HEK293 (cell line): ENCODE measurements at regions of chr16 and their contacts with region 1.

Region 1: DNA sequence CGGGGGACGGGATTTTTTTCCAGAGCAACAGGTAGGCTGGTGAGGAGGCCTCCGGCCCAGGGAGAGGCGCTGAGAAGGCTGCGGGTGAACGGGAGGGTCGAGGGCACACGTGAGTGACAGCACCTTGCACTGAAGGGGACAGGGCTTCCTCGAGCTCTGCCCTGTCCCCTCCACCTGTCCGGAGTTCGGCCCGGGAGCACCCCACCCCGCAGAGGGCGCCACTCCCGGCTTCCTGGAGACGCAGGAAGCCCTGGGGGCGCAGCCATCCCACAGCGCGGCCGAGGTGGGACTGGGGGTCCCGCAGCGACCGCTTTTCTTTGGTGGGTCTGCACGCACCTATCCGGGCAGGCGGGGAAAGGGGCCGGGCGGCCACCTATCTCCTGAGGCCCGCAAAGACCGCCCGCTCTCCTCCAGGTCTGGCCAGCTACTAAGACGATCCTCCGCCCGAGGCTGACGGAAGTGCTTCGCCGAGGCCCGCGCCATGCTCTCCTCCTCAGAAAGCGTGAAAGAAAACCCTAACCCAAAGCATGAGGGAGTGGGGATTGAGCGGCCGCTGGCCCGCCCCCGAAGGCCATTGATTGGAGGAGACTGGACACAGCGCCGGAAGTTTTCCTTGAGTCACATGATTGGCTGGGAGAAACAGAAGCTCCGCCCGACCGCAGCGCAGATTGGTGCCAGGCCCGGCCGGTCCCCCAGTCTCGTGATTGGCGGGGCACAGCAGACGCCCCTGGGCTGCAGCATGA is 34.3 kb downstream of the DDX19A start:
- H3K4me3 ChIP-seq: peak overlapping the region; percentile 57
- H3K27ac ChIP-seq: peak overlapping the region; percentile 88
- H3K4me1 ChIP-seq: peaks cover 3% of the 10 kb centered on the region; the same call in 1 of the 2 replicates
- CTCF ChIP-seq: peak; percentile 89

Region 2: GRCh38 chr16:70345840-70346239 is 35.2 kb before region 1 on chr16:
- CTCF ChIA-PET with region 1: no interaction called
- POLR2A ChIA-PET with region 1: interaction called, 12 read pairs
- H3K4me3 ChIP-seq: peak overlapping the region; percentile 92
- H3K27ac ChIP-seq: peak overlapping the region; percentile 78; the same call in 1 of the 2 replicates
- H3K4me1 ChIP-seq: peaks cover 3% of the 10 kb centered on the region; the same call in 1 of the 2 replicates
- CTCF ChIP-seq: no peak

Region 3: GRCh38 chr16:70438969-70439862 is 58.2 kb after region 1 on chr16 and contains the start of gene ST3GAL2:
- CTCF ChIA-PET with region 1: interaction called, 4 read pairs
- POLR2A ChIA-PET with region 1: interaction called, 28 read pairs
- H3K4me3 ChIP-seq: peak within 1 kb of the TSS; percentile 52
- H3K27ac ChIP-seq: peak within 1 kb of the TSS; percentile 71
- H3K4me1 ChIP-seq: peaks cover 7% of the 10 kb centered on the region
- CTCF ChIP-seq: peak; percentile 63

Region 4: DNA sequence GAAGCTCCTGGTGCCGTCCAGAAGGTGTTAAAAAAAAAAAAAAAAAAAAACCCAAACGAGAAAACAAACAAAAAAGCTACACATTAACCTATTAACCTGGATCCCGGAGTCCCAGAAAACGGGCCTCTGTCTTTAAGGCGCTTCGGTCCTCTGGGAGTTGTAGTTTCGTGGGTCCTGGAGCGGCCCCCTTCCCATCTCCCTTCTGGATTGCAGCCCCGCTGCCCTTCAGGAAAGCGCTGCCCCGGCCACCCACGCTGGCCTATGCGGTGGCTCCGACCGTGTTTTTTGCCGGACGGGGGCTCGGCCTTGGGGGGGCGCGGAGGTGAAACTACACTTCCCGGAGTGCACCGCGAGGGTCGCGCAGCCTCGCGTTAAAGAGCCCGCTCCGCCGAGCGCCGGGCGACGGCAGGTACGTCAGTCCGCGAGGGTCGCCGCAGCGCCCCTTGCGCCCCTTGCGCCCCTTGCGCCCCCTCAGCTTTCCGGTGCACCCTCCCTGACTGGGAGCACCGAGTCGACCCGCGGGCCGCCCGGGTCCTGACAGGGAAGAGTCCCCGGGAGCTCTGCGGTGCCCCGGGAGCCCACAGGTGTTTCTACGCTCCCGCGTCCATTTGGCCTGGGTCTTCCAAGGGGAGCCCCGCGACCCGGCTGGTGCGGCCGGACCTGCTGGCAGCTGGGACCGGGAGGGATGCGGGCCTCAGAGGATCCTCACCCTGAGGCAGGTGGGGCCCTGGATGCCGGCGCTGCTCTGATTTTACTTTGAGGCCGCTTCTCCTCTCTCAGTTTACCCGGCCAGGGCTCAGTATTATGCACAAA is 73.4 kb after region 1 on chr16 and contains the start of gene FCSK:
- CTCF ChIA-PET with region 1: interaction called, 3 read pairs
- POLR2A ChIA-PET with region 1: interaction called, 14 read pairs
- H3K4me3 ChIP-seq: peak within 1 kb of the TSS; percentile 89
- H3K27ac ChIP-seq: peak within 1 kb of the TSS; percentile 98
- H3K4me1 ChIP-seq: no peaks in the 10 kb centered on the region
- CTCF ChIP-seq: peak; percentile 92

Region 5: DNA sequence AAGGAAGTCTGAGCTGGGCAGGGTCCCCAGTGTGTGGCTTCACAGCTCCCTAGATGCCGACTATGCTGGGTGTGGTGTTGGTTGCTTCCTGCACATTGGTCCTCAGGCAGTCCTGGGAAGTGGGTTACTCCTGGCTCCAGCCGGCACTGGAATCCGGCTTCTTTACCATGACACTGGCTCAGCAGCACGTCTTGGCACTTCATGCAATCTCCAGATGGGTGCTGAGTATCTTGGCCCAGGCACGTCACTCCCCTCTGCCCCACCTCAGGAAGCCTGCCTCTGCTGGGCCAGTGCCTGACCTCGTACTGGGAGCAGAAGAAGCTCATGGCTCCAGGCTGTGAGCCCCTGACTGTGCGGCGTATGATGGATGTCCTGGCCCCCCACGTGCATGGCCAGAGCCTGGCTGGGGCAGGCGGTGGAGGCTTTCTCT is 97.9 kb after region 1 on chr16:
- CTCF ChIA-PET with region 1: no interaction called
- POLR2A ChIA-PET with region 1: interaction called, 17 read pairs
- H3K4me3 ChIP-seq: no peak overlapping the region
- H3K27ac ChIP-seq: no peak overlapping the region
- H3K4me1 ChIP-seq: peaks cover 2% of the 10 kb centered on the region; the same call in 1 of the 2 replicates
- CTCF ChIP-seq: no peak

Region 6: GRCh38 chr16:70523076-70523742 is 142.2 kb after region 1 on chr16 and contains the start of gene COG4:
- CTCF ChIA-PET with region 1: interaction called, 4 read pairs
- POLR2A ChIA-PET with region 1: interaction called, 42 read pairs
- H3K4me3 ChIP-seq: peak within 1 kb of the TSS; percentile 91
- H3K27ac ChIP-seq: peak within 1 kb of the TSS; percentile 99
- H3K4me1 ChIP-seq: peaks cover 12% of the 10 kb centered on the region
- CTCF ChIP-seq: no peak